ENCODE measurements at regions of chr2 and their contacts with region 1.

Region 1: GRCh38 chr2:105037572-105038382 is at the start of gene MRPS9:
- DNase-seq: peak; percentile 95
- ATAC-seq: peak; percentile 99
- H3K4me3 ChIP-seq: peak within 1 kb of the TSS; percentile 87
- H3K27ac ChIP-seq: peak within 1 kb of the TSS; percentile 78
- H3K4me1 ChIP-seq: no peaks in the 10 kb centered on the region
- H3K27me3 ChIP-seq: no peaks in the 10 kb centered on the region
- CTCF ChIP-seq: no peak
- POLR2A ChIP-seq: peak; percentile 89
- RAD21 ChIP-seq: no peak
- total RNA-seq, gene MRPS9: 20.6 and 36.7 TPM in 2 replicates

Region 2: DNA sequence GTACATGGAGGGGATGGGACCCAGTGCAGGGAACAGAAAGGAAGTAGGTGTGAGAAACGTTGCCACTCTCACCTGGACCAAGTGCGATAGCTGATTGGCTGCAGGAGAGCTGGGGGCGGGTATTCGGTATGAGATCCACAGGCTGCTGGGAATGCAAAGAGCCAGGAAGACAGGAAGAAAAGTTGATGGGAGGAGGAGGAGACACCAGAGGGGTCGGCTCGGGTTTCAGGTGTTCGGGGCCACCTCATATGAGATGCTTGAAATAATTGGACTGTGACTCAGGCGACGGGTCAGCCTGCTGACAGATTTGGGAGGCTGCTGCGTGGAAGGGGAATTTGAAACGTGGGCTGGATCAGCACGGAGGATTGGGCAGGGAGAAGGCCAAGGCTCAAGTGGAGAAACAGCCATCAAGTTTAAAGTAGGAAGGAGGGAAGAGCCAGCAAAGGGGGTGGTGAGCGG is 65.2 kb after region 1 on chr2:
- CTCF ChIA-PET with region 1: interaction called, 3 read pairs
- POLR2A ChIA-PET with region 1: no interaction called
- dilution Hi-C with region 1: no loop called
- in situ Hi-C with region 1: no loop called
- intact Hi-C with region 1: loop called (anchors 5 kb)
- DNase-seq: peak; percentile 88
- ATAC-seq: peak; percentile 88
- H3K4me3 ChIP-seq: no peak overlapping the region
- H3K27ac ChIP-seq: no peak overlapping the region
- H3K4me1 ChIP-seq: peaks cover 8% of the 10 kb centered on the region
- H3K27me3 ChIP-seq: no peaks in the 10 kb centered on the region
- CTCF ChIP-seq: no peak
- POLR2A ChIP-seq: no peak
- RAD21 ChIP-seq: no peak